Dendritic cell treated with granulocyte-macrophage colony-stimulating factor and Interleukin-4, amounts not matched to agents 40 ng/mL and 50 ng/mL, for 4 days (primary cell): ENCODE measurements at regions of chr7 and their contacts with region 1.

Region 1: GRCh38 chr7:22001345-22002004 is 55.8 kb upstream of the CDCA7L start:
- H3K4me3 Mint-ChIP-seq: no peak overlapping the region
- H3K27ac Mint-ChIP-seq: no peak overlapping the region
- H3K4me1 Mint-ChIP-seq: no peaks in the 10 kb centered on the region
- H3K27me3 Mint-ChIP-seq: no peaks in the 10 kb centered on the region

Region 2: DNA sequence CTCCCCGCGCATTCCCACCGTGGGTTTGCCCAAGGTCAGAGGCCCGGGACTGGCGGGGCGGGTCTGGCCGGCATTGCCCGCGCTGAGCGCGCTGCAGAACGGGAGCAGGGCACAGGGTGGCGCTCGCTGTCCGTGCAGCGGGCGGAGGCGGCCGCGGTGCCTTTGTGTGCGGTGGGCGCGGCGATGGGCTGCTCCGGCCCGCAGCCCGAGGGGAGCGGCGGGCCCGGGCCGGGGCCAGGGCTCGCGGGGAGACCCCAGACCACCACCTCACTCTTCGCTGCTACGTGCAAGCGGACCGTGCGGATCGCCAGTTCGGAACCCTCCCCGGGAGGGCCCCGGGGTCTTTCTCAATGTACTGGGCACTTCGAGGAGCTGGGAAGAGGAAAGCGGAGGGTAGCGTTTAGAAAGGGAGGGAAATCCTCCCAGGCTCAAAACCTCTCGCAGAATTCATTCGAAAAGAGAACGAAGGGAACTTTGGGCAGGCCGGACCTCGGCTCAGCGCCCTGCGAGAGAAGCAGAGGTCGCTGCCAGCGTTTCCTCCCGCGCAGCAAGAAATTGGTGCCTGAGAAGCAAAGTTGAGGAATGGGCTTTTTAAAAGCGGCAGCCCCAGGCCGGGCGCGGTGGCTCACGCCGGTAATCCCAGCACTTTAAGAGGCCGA is 1223.3 kb before region 1 on chr7:
- intact Hi-C with region 1: loop called (anchors 5 kb)
- H3K4me3 Mint-ChIP-seq: peak overlapping the region; percentile 61
- H3K27ac Mint-ChIP-seq: no peak overlapping the region
- H3K4me1 Mint-ChIP-seq: peaks cover 7% of the 10 kb centered on the region
- H3K27me3 Mint-ChIP-seq: peaks cover 76% of the 10 kb centered on the region

Region 3: DNA sequence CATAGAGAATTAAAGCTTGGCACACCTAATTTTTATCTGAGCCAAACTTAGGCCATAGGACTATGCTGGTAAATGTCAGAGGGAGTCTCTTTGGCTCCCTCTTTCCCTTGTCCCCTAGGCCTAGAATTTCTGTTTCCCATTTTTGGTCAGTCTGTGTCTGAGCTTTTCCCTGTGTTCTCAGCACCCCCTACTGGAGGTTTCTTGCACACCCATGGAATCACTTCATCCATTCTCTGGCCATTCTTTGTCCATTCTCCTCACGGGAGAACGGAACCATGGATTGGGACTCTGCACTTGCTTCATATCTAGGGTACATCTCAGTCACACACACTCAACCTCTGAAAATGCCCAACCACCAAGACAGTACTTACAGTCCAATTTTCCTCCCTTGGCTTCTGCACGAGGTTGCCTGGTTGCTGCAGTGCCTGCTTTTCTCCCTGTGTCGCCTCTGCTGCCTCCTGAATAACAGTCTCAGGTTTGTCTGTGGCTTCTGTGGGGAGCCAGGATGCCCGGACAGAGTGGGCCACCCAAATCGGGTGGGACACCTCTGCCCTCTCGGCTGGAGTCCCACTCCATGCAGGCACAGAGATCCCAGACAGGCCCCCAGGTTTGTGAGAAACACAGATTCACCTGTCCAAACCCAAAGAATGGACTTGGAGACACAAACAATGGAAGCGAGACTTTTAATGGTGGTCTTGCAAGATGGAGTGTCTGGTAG is 493.7 kb before region 1 on chr7:
- intact Hi-C with region 1: loop called (anchors 5 kb)
- H3K4me3 Mint-ChIP-seq: no peak overlapping the region
- H3K27ac Mint-ChIP-seq: no peak overlapping the region
- H3K4me1 Mint-ChIP-seq: no peaks in the 10 kb centered on the region
- H3K27me3 Mint-ChIP-seq: no peaks in the 10 kb centered on the region

Region 4: GRCh38 chr7:21771906-21772610 is 229.4 kb before region 1 on chr7:
- intact Hi-C with region 1: loop called (anchors 10 kb)
- H3K4me3 Mint-ChIP-seq: no peak overlapping the region
- H3K27ac Mint-ChIP-seq: no peak overlapping the region
- H3K4me1 Mint-ChIP-seq: no peaks in the 10 kb centered on the region
- H3K27me3 Mint-ChIP-seq: no peaks in the 10 kb centered on the region

Region 5: GRCh38 chr7:22202141-22202540 is 200.7 kb after region 1 on chr7:
- intact Hi-C with region 1: no loop called
- H3K4me3 Mint-ChIP-seq: no peak overlapping the region
- H3K27ac Mint-ChIP-seq: no peak overlapping the region
- H3K4me1 Mint-ChIP-seq: no peaks in the 10 kb centered on the region
- H3K27me3 Mint-ChIP-seq: no peaks in the 10 kb centered on the region